Naive thymus-derived CD4-positive, alpha-beta T cell (primary cell): ENCODE measurements at regions of chr6 and their contacts with region 1.

Region 1: GRCh38 chr6:37860226-37860839 is 40.8 kb downstream of the ZFAND3 start:
- DNase-seq: peak in 3 of 9 donors; percentile 10 to 24 (median 15)
- ATAC-seq: no peak
- H3K4me3 ChIP-seq: no peak overlapping the region
- H3K4me3 Mint-ChIP-seq: no peak overlapping the region
- H3K27ac ChIP-seq: no peak overlapping the region
- H3K27ac Mint-ChIP-seq: no peak overlapping the region
- H3K4me1 ChIP-seq: peaks cover 2 to 16% of the 10 kb centered on the region in 2 donors
- H3K4me1 Mint-ChIP-seq: peaks cover 33 to 86% (median 58%) of the 10 kb centered on the region in 7 donors
- H3K27me3 ChIP-seq: no peaks in the 10 kb centered on the region
- H3K27me3 Mint-ChIP-seq: no peaks in the 10 kb centered on the region

Region 2: DNA sequence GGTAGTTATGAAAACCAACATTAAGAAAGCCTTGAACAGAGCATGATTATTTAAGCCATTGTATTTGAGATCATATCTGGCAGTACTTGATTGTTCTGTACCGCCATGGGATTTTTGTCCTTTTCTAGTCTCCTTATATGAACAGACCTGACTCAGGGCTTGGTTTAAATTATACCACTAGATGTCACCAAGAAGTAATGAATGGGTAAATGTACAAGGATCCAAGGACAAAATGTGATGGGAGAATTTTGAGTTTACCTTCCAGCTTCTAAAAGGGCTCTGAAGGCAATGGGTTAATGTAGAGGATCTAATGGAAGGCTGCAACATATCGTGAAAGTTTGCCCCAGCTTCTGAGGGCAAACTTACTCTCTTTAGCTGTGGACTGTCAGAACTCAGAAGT is 494.6 kb before region 1 on chr6:
- CTCF ChIA-PET with region 1: no interaction called
- POLR2A ChIA-PET with region 1: no interaction called
- intact Hi-C with region 1: no loop called
- DNase-seq: no peak
- ATAC-seq: no peak
- H3K4me3 ChIP-seq: no peak overlapping the region
- H3K4me3 Mint-ChIP-seq: no peak overlapping the region
- H3K27ac ChIP-seq: no peak overlapping the region
- H3K27ac Mint-ChIP-seq: no peak overlapping the region
- H3K4me1 ChIP-seq: no peaks in the 10 kb centered on the region
- H3K4me1 Mint-ChIP-seq: peaks cover 0 to 13% (median 4%) of the 10 kb centered on the region in 7 donors
- H3K27me3 ChIP-seq: no peaks in the 10 kb centered on the region
- H3K27me3 Mint-ChIP-seq: no peaks in the 10 kb centered on the region

Region 3: GRCh38 chr6:37705239-37706051 is 154.9 kb before region 1 on chr6:
- CTCF ChIA-PET with region 1: interaction called, 3 read pairs
- POLR2A ChIA-PET with region 1: no interaction called
- intact Hi-C with region 1: loop called in 1 of 2 experiments (anchors 2 kb)
- DNase-seq: peak; percentile 37 to 82 (median 78)
- ATAC-seq: peak; percentile 86
- H3K4me3 ChIP-seq: peak overlapping the region; percentile 60
- H3K4me3 Mint-ChIP-seq: peak overlapping the region; percentile 79 to 90 (median 86)
- H3K27ac ChIP-seq: peak overlapping the region; percentile 46
- H3K27ac Mint-ChIP-seq: peak overlapping the region; percentile 55 to 91 (median 82)
- H3K4me1 ChIP-seq: peaks cover 5 to 6% of the 10 kb centered on the region in 2 donors
- H3K4me1 Mint-ChIP-seq: peaks cover 10 to 17% (median 14%) of the 10 kb centered on the region in 7 donors
- H3K27me3 ChIP-seq: no peaks in the 10 kb centered on the region
- H3K27me3 Mint-ChIP-seq: peaks cover 0 to 39% (median 0%) of the 10 kb centered on the region in 5 donors

Region 4: DNA sequence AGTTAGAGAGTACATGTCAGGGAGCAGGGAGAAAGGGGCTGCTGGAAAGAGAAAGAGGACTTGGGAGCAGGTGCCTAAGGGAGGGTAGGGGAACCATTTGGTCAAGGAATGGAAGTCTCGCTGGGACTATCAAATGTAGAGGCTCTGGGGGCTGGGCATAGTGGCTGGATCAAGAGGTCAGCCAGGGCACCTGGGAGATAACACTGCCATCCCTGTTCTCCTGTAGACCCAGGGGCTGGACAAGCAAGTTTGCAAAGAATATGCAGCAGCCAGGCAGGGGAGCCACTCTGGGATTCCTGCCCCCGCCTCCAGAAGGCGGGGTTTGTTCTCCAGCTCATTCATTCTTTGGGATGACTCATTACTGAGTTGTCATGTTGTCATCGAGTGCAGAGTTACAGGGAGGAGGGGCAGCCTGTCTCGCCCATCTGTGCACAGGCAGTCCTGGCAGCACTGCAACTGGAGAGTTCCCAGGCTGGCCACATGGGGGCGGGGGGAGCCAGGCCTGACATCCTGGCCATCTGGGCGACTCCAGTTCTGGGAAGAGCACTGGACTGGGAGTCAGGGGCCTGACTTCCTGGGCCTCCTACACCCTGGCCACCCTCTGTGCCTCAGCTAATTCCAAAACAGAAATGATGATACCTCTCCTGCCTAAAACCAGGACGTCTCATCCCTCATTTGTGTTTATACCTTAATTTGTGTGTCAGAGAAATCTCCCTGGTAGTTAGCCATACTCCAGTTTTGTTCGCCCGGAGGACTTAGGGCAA is 69.0 kb before region 1 on chr6:
- CTCF ChIA-PET with region 1: interaction called, 3 read pairs
- POLR2A ChIA-PET with region 1: no interaction called
- intact Hi-C with region 1: loop called (anchors 1 kb)
- DNase-seq: peak; percentile 29 to 83 (median 59)
- ATAC-seq: peak; percentile 99
- H3K4me3 ChIP-seq: no peak overlapping the region
- H3K4me3 Mint-ChIP-seq: no peak overlapping the region
- H3K27ac ChIP-seq: no peak overlapping the region
- H3K27ac Mint-ChIP-seq: no peak overlapping the region
- H3K4me1 ChIP-seq: no peaks in the 10 kb centered on the region
- H3K4me1 Mint-ChIP-seq: peaks cover 0 to 11% (median 0%) of the 10 kb centered on the region in 7 donors
- H3K27me3 ChIP-seq: no peaks in the 10 kb centered on the region
- H3K27me3 Mint-ChIP-seq: peaks cover 0 to 10% (median 0%) of the 10 kb centered on the region in 5 donors